BJ (cell line): ENCODE measurements at regions of chr14 and their contacts with region 1.

Region 1: DNA sequence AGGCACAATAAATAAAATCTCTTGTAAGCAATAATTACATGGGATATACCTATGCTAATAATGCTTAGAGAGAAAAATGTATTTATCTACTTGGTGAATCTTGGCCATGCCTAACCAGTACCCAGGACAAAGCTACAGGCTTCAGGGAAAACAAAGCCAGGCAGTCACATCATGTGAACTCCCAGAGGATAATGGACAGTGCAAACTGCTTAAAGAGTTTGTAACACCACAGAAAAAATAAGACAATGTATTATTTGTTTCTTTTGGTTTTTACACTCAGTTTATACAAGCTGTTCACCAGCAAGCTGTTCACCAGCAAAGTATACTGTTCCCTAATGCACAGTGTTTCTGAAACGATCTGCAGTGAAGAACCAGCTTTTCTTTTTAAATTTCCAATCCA is 38.0 kb downstream of the DICER1 start:
- DNase-seq: no peak
- H3K4me3 ChIP-seq: no peak overlapping the region
- H3K27me3 ChIP-seq: no peaks in the 10 kb centered on the region
- CTCF ChIP-seq: no peak

Region 2: GRCh38 chr14:94773071-94773648 is 346.2 kb before region 1 on chr14:
- CTCF ChIA-PET with region 1: no interaction called
- POLR2A ChIA-PET with region 1: no interaction called
- DNase-seq: no peak
- H3K4me3 ChIP-seq: no peak overlapping the region
- H3K27me3 ChIP-seq: peaks cover 43% of the 10 kb centered on the region
- CTCF ChIP-seq: no peak

Region 3: DNA sequence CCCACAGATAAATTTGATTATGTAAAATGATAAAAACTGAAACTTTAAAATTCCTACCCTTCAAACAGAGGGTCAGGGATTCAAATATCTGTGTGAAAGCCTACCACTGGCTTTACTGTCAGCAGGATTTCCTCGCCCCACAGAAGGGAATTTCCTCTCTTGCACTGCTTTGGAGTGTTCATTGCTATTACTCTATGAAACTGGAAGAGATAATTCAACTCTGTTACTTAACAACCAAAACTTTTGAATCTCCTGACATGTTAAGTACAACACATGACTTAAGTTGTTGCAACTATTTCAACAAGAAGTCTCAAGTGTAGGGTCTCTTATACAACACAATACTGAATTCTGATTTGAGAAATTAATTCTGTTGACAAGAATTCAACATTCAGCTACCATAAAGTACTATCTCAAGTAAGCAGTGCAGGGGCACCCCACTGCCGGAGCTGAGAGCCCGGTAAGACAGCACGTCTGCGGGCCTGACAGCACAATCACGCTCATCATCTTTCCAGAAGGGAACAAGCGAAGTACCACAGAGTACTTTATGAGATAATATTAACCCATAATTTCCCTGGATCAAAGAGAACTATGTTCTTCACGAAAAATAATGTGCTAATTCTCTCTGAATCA is 15.1 kb after region 1 on chr14:
- CTCF ChIA-PET with region 1: no interaction called
- POLR2A ChIA-PET with region 1: no interaction called
- DNase-seq: no peak
- H3K4me3 ChIP-seq: no peak overlapping the region
- H3K27me3 ChIP-seq: no peaks in the 10 kb centered on the region
- CTCF ChIP-seq: no peak

Region 4: GRCh38 chr14:96501742-96502617 is 1382.6 kb after region 1 on chr14 and contains the start of gene PAPOLA:
- CTCF ChIA-PET with region 1: no interaction called
- POLR2A ChIA-PET with region 1: interaction called, 13 read pairs
- DNase-seq: peak; percentile 80
- H3K4me3 ChIP-seq: peak within 1 kb of the TSS; percentile 95
- H3K27me3 ChIP-seq: no peaks in the 10 kb centered on the region
- CTCF ChIP-seq: peak; percentile 33
- polyA plus RNA-seq, gene PAPOLA: 92.4 and 117 TPM in 2 replicates